Activated T-helper 1 cell treated with anti-CD3 and anti-CD28 coated beads, Interleukin-12 subunit alpha, Interleukin-12 subunit beta, Interleukin-2, Interleukin-4 antibody, amounts not matched to agents 30 ng/mL and 10 ng/mL and 1 ng/mL, durations not matched to agents 14 hours and 24 hours and 36 hours (primary cell): ENCODE measurements at regions of chr2 and their contacts with region 1.

Region 1: GRCh38 chr2:9843229-9844035 is at the start of gene TAF1B:
- DNase-seq: peak; percentile 87
- H3K4me3 Mint-ChIP-seq: peak within 1 kb of the TSS; percentile 91
- H3K27ac Mint-ChIP-seq: peak within 1 kb of the TSS; percentile 93
- H3K4me1 Mint-ChIP-seq: peaks cover 46% of the 10 kb centered on the region
- H3K27me3 Mint-ChIP-seq: no peaks in the 10 kb centered on the region
- total RNA-seq, gene TAF1B: 23.3 and 25.1 TPM in 2 replicates

Region 2: DNA sequence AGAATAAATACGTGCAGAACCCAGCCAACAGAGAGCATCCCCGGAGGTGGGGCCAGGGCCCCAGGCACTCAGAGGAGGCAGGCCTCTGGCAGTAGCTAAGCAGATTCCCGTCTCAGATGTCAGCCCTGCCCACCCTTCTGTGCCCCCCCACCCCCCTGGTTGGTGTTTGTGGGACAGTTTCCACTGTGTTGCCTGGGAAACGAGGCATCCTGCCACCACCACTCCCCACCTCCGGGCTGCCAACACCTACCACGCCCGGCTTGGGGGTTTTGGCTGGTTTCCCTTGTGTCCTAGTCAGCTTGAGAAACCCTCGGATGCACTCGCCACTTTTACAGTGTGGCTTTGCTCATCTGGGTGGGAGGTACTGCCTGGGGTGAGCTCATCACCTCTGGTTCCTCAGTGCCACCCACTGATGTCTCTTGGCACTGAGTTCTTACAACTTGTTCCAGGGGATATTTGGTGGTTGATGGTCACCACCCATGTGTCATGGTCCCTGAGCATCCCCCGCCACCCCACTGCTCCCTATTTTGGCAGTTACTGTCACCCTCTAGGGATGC is 140.3 kb before region 1 on chr2:
- intact Hi-C with region 1: loop called (anchors 5 kb)
- DNase-seq: peak; percentile 79
- H3K4me3 Mint-ChIP-seq: no peak overlapping the region
- H3K27ac Mint-ChIP-seq: peak overlapping the region; percentile 74
- H3K4me1 Mint-ChIP-seq: peaks cover 48% of the 10 kb centered on the region
- H3K27me3 Mint-ChIP-seq: no peaks in the 10 kb centered on the region

Region 3: GRCh38 chr2:9897331-9897737 is 53.9 kb after region 1 on chr2:
- intact Hi-C with region 1: loop called (anchors 1 kb)
- DNase-seq: no peak
- H3K4me3 Mint-ChIP-seq: no peak overlapping the region
- H3K27ac Mint-ChIP-seq: peak overlapping the region; percentile 14
- H3K4me1 Mint-ChIP-seq: peaks cover 29% of the 10 kb centered on the region
- H3K27me3 Mint-ChIP-seq: no peaks in the 10 kb centered on the region

Region 4: GRCh38 chr2:9975805-9976447 is 132.5 kb after region 1 on chr2:
- intact Hi-C with region 1: loop called (anchors 1 kb)
- DNase-seq: no peak
- H3K4me3 Mint-ChIP-seq: no peak overlapping the region
- H3K27ac Mint-ChIP-seq: peak overlapping the region; percentile 4
- H3K4me1 Mint-ChIP-seq: peaks cover 72% of the 10 kb centered on the region
- H3K27me3 Mint-ChIP-seq: peaks cover 4% of the 10 kb centered on the region

Region 5: GRCh38 chr2:10331027-10331701 is 487.7 kb after region 1 on chr2:
- intact Hi-C with region 1: loop called (anchors 1 kb)
- DNase-seq: peak; percentile 62
- H3K4me3 Mint-ChIP-seq: peak overlapping the region; percentile 86
- H3K27ac Mint-ChIP-seq: peak overlapping the region; percentile 95
- H3K4me1 Mint-ChIP-seq: peaks cover 59% of the 10 kb centered on the region
- H3K27me3 Mint-ChIP-seq: no peaks in the 10 kb centered on the region

Region 6: GRCh38 chr2:10344105-10345066 is 501.0 kb after region 1 on chr2:
- intact Hi-C with region 1: no loop called
- DNase-seq: no peak
- H3K4me3 Mint-ChIP-seq: no peak overlapping the region
- H3K27ac Mint-ChIP-seq: no peak overlapping the region
- H3K4me1 Mint-ChIP-seq: peaks cover 34% of the 10 kb centered on the region
- H3K27me3 Mint-ChIP-seq: no peaks in the 10 kb centered on the region